Activated T-helper 2 cell treated with anti-CD3 and anti-CD28 coated beads, Interferon-gamma antibody, Interleukin-2, Interleukin-4, amounts not matched to agents 10 μg/mL and 5 μg/mL and 100 μg/mL, durations not matched to agents 14 hours and 24 hours and 36 hours (primary cell): ENCODE measurements at regions of chr16 and their contacts with region 1.

Region 1: DNA sequence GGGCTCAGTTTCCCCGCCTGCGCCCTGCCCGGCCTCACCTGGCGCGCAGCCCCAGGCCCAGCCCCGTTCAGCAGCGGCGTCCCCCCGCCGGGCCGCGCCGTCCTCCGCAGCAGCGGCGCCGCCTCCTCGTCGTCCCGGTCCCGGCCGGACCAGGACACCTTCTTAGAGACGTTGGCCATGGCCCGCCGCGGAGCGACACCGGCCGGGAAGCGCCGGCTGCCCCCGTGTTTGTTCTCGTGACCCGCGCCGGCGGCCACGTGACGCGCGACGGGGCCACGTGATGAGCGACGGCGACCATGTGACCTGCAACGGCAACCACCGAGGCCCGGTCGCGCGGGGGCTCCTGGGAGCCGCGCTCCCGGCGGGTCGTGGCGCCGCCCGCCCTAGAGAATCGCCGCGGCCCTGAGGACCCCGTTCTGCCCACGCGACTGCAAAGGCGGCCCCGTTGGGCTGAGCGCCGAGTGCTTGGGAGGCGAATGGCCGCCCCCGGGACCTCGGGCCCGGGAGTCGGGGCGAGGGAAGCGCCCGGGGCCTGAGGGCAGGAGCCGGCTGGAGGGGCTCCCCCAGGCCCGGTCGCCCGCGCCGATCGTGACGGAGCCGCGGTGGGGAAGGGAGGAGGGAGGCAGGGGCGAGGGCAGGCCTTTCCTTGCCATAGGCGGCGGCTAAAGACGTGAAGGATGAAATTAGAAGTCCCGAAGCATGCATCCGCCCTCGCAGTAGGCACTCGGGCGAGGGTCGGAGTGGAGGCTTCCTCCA is at the start of gene CLCN7:
- DNase-seq: peak; percentile 88
- H3K4me3 Mint-ChIP-seq: peak within 1 kb of the TSS; percentile 84
- H3K27ac Mint-ChIP-seq: peak within 1 kb of the TSS; percentile 77
- H3K4me1 Mint-ChIP-seq: peaks cover 7% of the 10 kb centered on the region
- H3K27me3 Mint-ChIP-seq: no peaks in the 10 kb centered on the region
- total RNA-seq, gene CLCN7: 52.2 and 54.3 TPM in 2 replicates

Region 2: DNA sequence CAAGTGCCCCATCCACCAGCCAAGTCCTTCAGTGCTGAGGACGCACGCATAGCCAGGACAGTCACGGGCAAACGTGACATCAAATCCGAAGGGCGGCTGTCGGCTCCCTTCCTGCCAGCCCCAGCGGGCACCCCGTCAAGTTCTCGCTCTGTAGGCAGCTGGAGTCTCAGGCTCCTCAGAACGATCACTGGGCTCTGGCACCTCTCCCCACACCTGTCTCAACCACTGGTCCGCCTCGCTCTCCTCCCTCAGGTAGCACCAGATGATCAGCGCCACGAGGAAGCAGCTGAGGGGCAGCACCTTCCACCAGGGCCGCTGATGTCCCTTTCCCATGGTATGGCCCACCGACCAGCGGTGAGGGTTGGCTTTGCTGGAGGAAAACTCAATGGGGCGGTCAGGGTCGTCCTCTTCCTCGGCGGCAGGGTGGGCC is 54.8 kb before region 1 on chr16:
- intact Hi-C with region 1: loop called (anchors 2 kb)
- DNase-seq: peak; percentile 16
- H3K4me3 Mint-ChIP-seq: peak overlapping the region; percentile 87
- H3K27ac Mint-ChIP-seq: peak overlapping the region; percentile 98
- H3K4me1 Mint-ChIP-seq: peaks cover 4% of the 10 kb centered on the region
- H3K27me3 Mint-ChIP-seq: no peaks in the 10 kb centered on the region

Region 3: GRCh38 chr16:1492923-1493745 is 18.2 kb after region 1 on chr16 and contains the start of gene TELO2:
- intact Hi-C with region 1: loop called (anchors 2 kb)
- DNase-seq: peak; percentile 84
- H3K4me3 Mint-ChIP-seq: peak within 1 kb of the TSS; percentile 90
- H3K27ac Mint-ChIP-seq: peak within 1 kb of the TSS; percentile 98
- H3K4me1 Mint-ChIP-seq: peaks cover 10% of the 10 kb centered on the region
- H3K27me3 Mint-ChIP-seq: no peaks in the 10 kb centered on the region
- total RNA-seq, gene TELO2: 72.6 and 74.8 TPM in 2 replicates

Region 4: DNA sequence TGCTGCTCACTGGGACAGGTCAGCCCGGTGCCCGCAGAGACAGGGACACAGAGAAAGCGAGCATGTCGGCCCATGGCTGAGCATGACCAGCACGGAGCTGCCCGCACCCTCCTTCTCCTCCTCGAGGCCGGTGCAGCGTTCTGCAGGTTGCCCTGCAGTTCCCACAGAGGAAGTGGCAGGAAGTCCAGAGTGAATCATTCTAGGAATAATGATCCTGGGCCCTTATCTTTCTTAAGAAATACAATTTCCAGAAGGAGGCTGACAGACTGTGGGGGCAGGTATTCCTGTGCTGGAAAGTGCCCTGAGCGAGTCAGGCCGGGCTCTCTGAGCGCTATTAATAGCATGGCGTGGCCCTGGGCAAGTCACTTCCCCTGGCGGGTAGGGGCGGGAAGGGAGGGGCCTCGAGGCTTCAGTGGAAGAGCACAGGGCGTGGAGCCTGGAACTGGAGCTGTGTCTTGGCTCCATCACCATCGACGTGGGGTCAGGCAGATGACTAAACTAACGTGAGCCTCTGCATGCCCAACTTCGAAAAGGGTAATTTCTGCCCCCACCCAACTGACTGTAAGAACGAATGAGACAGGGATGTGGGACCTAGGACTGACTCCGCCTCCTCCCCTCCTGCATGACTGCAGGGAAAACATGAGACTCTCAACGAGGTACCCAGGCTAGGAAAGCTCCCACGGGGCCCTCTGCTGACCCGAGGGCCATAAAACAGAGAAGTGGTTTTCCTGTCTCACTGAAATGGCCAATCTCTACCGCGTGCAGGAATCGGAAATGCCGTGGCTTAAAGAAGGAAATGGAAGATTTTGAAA is 68.3 kb after region 1 on chr16:
- intact Hi-C with region 1: loop called (anchors 2 kb)
- DNase-seq: peak; percentile 40
- H3K4me3 Mint-ChIP-seq: peak overlapping the region; percentile 66
- H3K27ac Mint-ChIP-seq: peak overlapping the region; percentile 94
- H3K4me1 Mint-ChIP-seq: peaks cover 24% of the 10 kb centered on the region
- H3K27me3 Mint-ChIP-seq: no peaks in the 10 kb centered on the region

Region 5: GRCh38 chr16:1651094-1651973 is 176.4 kb after region 1 on chr16:
- intact Hi-C with region 1: no loop called
- DNase-seq: no peak
- H3K4me3 Mint-ChIP-seq: no peak overlapping the region
- H3K27ac Mint-ChIP-seq: no peak overlapping the region
- H3K4me1 Mint-ChIP-seq: peaks cover 12% of the 10 kb centered on the region
- H3K27me3 Mint-ChIP-seq: no peaks in the 10 kb centered on the region